Endothelial cell of umbilical vein (primary cell): ENCODE measurements at regions of chrX and their contacts with region 1.

Region 1: DNA sequence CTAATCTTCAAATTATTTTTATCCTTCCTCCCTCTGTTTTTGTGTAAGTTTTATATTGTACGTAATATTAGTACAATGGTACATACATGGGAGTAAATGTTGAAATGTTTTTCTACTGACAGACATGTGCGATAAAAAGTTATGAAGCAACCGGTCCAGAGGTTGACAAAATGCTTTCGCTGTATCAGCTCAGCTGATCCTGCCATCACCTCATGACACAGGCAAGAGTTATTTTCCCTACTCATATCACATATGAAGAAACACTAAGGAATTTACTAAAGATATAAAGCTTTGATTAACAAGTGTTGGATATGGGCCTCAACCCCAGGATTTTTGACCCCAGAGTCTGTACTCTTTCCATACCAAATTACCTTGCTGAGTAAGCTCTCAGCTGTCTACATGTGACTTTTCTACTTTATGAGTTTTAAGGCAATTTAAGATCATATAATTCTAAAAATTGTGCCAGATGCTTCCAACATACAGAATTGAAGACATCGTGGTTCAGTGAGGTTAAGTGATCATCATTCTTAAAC is 50.0 kb downstream of the CLCN5 start:
- DNase-seq: no peak
- H3K4me3 ChIP-seq: no peak overlapping the region
- H3K27ac ChIP-seq: no peak overlapping the region
- H3K4me1 ChIP-seq: no peaks in the 10 kb centered on the region
- H3K27me3 ChIP-seq: no peaks in the 10 kb centered on the region
- CTCF ChIP-seq: no peak
- POLR2A ChIP-seq: no peak

Region 2: DNA sequence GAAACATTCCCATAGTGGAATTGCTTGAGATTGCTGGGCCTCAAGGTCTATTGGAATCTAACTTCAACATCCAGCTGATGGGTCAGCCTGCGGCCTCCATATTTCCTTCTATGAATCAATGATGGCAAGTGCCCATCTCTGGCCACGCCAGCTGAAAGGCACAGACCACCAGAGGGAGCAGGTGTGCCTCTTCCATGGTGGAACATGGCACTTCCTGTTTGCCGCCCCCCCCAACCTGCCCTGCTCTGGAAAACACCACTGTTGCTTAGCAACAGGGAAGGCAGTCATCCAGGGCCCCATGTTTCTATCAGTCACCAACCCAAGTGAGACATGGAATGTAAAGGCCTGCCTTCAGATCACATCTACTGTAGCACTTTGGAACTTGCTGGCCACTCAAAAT is 131.7 kb before region 1 on chrX:
- CTCF ChIA-PET with region 1: no interaction called
- POLR2A ChIA-PET with region 1: no interaction called
- dilution Hi-C with region 1: no loop called
- intact Hi-C with region 1: no loop called
- DNase-seq: peak; percentile 46
- H3K4me3 ChIP-seq: no peak overlapping the region
- H3K27ac ChIP-seq: no peak overlapping the region
- H3K4me1 ChIP-seq: no peaks in the 10 kb centered on the region
- H3K27me3 ChIP-seq: no peaks in the 10 kb centered on the region
- CTCF ChIP-seq: peak; percentile 21 to 34
- POLR2A ChIP-seq: no peak

Region 3: GRCh38 chrX:49958727-49959485 is 13.5 kb before region 1 on chrX:
- CTCF ChIA-PET with region 1: no interaction called
- POLR2A ChIA-PET with region 1: no interaction called
- dilution Hi-C with region 1: no loop called
- intact Hi-C with region 1: loop called (anchors 2 kb)
- DNase-seq: no peak
- H3K4me3 ChIP-seq: no peak overlapping the region
- H3K27ac ChIP-seq: no peak overlapping the region
- H3K4me1 ChIP-seq: no peaks in the 10 kb centered on the region
- H3K27me3 ChIP-seq: no peaks in the 10 kb centered on the region
- CTCF ChIP-seq: no peak
- POLR2A ChIP-seq: no peak

Region 4: DNA sequence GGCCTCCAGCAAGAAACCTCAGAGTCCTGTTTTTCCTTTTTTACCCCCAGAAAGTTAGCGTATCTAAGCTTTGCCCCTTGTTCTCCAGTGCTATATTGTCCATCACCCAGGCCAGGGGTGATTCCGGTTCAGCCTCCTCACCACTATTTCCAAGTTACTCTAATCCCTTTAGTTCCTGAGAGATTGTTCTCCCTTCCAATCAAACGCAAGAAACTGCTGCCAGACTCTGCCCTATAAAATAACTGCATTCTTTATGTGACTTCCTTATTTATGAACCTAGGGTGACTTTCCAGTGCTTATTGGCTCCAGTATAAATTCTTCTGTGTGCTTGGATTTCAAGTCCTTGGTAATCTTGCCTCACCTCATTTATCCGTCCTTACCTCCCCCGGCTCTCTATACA is 15.7 kb after region 1 on chrX:
- CTCF ChIA-PET with region 1: no interaction called
- POLR2A ChIA-PET with region 1: no interaction called
- dilution Hi-C with region 1: no loop called
- intact Hi-C with region 1: no loop called
- DNase-seq: no peak
- H3K4me3 ChIP-seq: no peak overlapping the region
- H3K27ac ChIP-seq: no peak overlapping the region
- H3K4me1 ChIP-seq: no peaks in the 10 kb centered on the region
- H3K27me3 ChIP-seq: no peaks in the 10 kb centered on the region
- CTCF ChIP-seq: no peak
- POLR2A ChIP-seq: no peak